Activated T-helper 1 cell treated with anti-CD3 and anti-CD28 coated beads, Interleukin-12 subunit alpha, Interleukin-12 subunit beta, Interleukin-2, Interleukin-4 antibody, amounts not matched to agents 30 ng/mL and 10 ng/mL and 1 ng/mL, durations not matched to agents 14 hours and 24 hours and 36 hours (primary cell): ENCODE measurements at regions of chr9 and their contacts with region 1.

Region 1: GRCh38 chr9:111992523-111992922 is 95.9 kb downstream of the UGCG start:
- DNase-seq: no peak
- H3K4me3 Mint-ChIP-seq: no peak overlapping the region
- H3K27ac Mint-ChIP-seq: peak overlapping the region; percentile 37
- H3K4me1 Mint-ChIP-seq: peaks cover 26% of the 10 kb centered on the region
- H3K27me3 Mint-ChIP-seq: peaks cover 14% of the 10 kb centered on the region

Region 2: DNA sequence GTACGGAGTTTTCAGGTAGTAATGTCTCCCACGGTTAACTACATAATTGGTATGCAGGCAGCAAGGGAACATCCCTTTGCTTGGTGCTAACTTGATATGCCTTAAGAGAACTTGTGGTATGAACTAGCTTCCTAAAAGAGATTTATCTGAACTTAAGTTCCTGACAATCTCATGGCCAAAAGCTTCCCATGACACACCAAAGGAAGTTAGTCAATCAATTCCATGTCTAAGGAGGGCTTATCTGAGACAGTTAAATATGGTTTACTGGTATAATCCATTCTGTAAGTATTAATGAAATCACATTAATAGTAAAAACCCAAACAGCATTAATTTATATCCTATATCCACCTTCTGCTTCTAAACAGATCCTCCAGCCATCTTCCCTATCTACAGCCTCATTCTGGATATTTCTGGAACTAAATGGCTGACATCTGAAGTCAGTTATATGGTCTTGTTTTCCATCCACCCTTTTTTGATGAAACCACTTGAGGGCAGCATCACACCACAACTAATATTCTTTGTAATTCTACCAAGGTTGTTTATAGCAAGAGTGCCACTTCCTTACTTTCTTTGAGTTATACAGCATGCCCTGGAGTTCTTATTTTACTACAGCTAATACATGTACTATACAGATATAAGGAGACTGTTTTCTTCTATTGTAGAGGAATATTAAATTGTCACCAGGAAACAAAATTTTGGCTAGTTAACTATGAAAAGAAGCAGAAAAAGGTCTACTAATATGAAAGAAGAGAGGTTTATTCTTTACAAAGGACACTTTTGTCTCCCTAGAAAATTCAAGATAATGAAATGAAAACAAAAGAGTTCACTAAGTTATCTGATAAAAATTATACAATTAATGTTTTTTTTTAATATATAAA is 232.5 kb before region 1 on chr9:
- intact Hi-C with region 1: loop called (anchors 5 kb)
- DNase-seq: peak; percentile 39
- H3K4me3 Mint-ChIP-seq: no peak overlapping the region
- H3K27ac Mint-ChIP-seq: no peak overlapping the region
- H3K4me1 Mint-ChIP-seq: no peaks in the 10 kb centered on the region
- H3K27me3 Mint-ChIP-seq: peaks cover 2% of the 10 kb centered on the region

Region 3: GRCh38 chr9:111937781-111938426 is 54.6 kb before region 1 on chr9:
- intact Hi-C with region 1: loop called (anchors 1 kb)
- DNase-seq: peak; percentile 28
- H3K4me3 Mint-ChIP-seq: peak overlapping the region; percentile 63
- H3K27ac Mint-ChIP-seq: peak overlapping the region; percentile 88
- H3K4me1 Mint-ChIP-seq: peaks cover 31% of the 10 kb centered on the region
- H3K27me3 Mint-ChIP-seq: no peaks in the 10 kb centered on the region

Region 4: GRCh38 chr9:112012026-112012902 is 19.7 kb after region 1 on chr9:
- intact Hi-C with region 1: loop called (anchors 1 kb)
- DNase-seq: no peak
- H3K4me3 Mint-ChIP-seq: no peak overlapping the region
- H3K27ac Mint-ChIP-seq: no peak overlapping the region
- H3K4me1 Mint-ChIP-seq: peaks cover 21% of the 10 kb centered on the region
- H3K27me3 Mint-ChIP-seq: peaks cover 50% of the 10 kb centered on the region

Region 5: DNA sequence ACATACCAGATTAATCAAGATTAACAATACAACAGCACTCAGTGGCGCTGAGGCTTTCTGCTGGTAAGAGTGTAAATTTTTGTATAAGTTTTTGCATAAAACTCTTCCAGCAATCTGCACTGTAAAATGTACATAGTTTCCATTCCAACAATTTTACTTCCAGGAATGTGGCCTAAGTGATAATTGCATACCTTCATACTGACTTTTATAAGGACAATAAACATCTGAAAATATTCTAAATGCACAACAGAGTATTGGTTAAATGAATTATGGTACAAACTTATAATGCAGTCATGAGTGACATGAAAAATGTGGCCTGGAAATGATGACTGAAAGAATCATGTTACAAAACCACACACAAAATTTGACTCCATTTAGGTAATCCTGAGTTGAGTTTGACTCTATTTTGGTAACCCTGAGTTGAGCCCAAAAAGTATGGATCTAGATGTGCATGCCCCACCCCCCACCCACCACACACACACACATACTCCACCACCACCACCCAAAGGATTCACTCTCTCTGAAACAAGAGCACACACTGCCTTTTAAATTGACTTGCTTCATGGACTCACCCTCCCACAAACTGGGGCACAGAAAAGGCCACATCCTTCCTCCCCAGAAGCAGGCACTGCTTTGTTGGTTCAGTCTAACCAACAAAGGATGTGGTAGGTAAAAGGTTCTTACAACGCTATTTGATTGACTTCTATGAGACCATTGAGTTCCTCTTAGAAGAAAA is 44.9 kb after region 1 on chr9:
- intact Hi-C with region 1: loop called (anchors 1 kb)
- DNase-seq: peak; percentile 74
- H3K4me3 Mint-ChIP-seq: peak overlapping the region; percentile 43
- H3K27ac Mint-ChIP-seq: peak overlapping the region; percentile 82
- H3K4me1 Mint-ChIP-seq: peaks cover 53% of the 10 kb centered on the region
- H3K27me3 Mint-ChIP-seq: peaks cover 16% of the 10 kb centered on the region

Region 6: DNA sequence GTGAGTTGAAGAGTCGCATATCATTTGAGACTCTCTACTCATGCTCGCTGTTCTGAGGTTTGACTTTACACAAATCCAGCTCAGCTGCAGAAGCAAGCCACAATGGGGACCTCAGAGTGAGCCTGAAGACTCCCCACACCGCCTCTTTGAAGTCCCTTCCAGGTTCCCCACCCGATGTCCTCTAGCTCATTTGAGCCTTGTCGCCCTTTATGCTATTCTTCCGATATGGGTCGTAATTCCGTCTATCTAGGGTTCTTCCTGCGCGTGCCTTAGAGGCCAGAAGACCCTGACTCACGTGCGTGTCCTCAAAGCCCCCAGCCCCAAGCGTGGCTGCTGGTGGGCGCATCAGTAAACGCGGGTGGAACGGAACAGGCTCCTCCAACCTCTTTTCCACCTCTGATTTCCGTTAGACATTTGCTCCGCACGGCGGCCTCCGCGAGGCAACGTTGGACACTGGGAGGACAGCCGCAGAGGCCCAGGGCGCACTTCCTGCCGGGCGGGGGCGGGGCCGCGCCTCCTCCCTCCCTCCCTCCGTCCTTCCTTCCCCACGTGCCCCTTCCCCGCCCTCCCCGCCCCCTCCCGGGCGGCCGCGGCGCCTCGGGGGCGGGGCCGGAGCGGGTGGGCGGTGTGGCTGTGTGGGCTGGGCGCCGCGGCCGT is 757.7 kb after region 1 on chr9 and contains the start of gene SNX30:
- intact Hi-C with region 1: loop called (anchors 5 kb)
- DNase-seq: peak; percentile 78
- H3K4me3 Mint-ChIP-seq: peak within 1 kb of the TSS; percentile 86
- H3K27ac Mint-ChIP-seq: peak within 1 kb of the TSS; percentile 88
- H3K4me1 Mint-ChIP-seq: peaks cover 67% of the 10 kb centered on the region
- H3K27me3 Mint-ChIP-seq: peaks cover 5% of the 10 kb centered on the region
- total RNA-seq, gene SNX30: 1.9 and 2.1 TPM in 2 replicates